Activated T-helper 2 cell treated with anti-CD3 and anti-CD28 coated beads, Interferon-gamma antibody, Interleukin-2, Interleukin-4, amounts not matched to agents 10 μg/mL and 5 μg/mL and 100 μg/mL, durations not matched to agents 14 hours and 24 hours and 36 hours (primary cell): ENCODE measurements at regions of chr17 and their contacts with region 1.

Region 1: GRCh38 chr17:59619293-59620063 is at the start of gene CLTC:
- DNase-seq: peak; percentile 92
- H3K4me3 Mint-ChIP-seq: peak within 1 kb of the TSS; percentile 91
- H3K27ac Mint-ChIP-seq: peak within 1 kb of the TSS; percentile 95
- H3K4me1 Mint-ChIP-seq: peaks cover 43% of the 10 kb centered on the region
- H3K27me3 Mint-ChIP-seq: no peaks in the 10 kb centered on the region
- total RNA-seq, gene CLTC: 188 and 193 TPM in 2 replicates

Region 2: GRCh38 chr17:59331129-59331928 is 288.1 kb before region 1 on chr17 and contains the start of gene YPEL2:
- intact Hi-C with region 1: no loop called
- DNase-seq: peak; percentile 84
- H3K4me3 Mint-ChIP-seq: peak within 1 kb of the TSS; percentile 84
- H3K27ac Mint-ChIP-seq: peak within 1 kb of the TSS; percentile 68
- H3K4me1 Mint-ChIP-seq: peaks cover 41% of the 10 kb centered on the region
- H3K27me3 Mint-ChIP-seq: peaks cover 14% of the 10 kb centered on the region
- total RNA-seq, gene YPEL2: 5.0 and 5.3 TPM in 2 replicates

Region 3: GRCh38 chr17:59601130-59601529 is 18.3 kb before region 1 on chr17:
- intact Hi-C with region 1: loop called (anchors 2 kb)
- DNase-seq: peak; percentile 23
- H3K4me3 Mint-ChIP-seq: no peak overlapping the region
- H3K27ac Mint-ChIP-seq: peak overlapping the region; percentile 43
- H3K4me1 Mint-ChIP-seq: peaks cover 19% of the 10 kb centered on the region
- H3K27me3 Mint-ChIP-seq: no peaks in the 10 kb centered on the region

Region 4: DNA sequence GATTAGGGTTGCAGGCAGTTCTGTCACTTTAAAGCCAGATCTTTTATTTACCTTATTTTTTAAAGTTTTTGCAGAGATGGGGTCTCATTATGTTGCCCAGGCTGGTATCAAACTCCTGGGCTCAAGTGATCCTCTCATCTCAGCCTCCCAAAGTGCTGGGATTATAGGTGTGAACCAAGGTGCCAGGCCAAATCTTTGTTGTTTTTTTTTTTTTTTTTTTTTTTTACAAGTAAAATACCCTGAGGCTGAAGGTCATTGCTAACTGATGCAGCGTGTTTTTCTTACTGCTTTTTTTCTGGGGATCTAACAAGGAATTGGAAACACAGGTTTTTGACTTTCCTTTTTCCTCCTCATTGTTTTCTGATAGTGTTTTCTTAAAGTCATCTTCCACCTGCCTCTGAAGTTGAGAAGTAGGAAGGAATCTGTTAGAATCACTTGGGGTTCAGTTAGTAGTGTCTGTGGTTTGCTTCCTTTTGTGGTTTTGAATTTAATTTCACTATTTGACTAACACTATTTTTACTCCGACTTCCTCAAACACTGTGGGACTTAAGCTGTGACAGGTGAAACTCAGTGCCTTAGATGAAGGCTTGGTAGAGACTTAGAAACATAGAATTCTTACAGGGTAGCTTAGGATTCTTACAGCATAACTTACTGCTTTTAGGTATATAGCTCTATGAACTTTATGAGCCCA is 22.5 kb after region 1 on chr17:
- intact Hi-C with region 1: loop called (anchors 2 kb)
- DNase-seq: no peak
- H3K4me3 Mint-ChIP-seq: peak overlapping the region; percentile 40
- H3K27ac Mint-ChIP-seq: peak overlapping the region; percentile 48
- H3K4me1 Mint-ChIP-seq: peaks cover 34% of the 10 kb centered on the region
- H3K27me3 Mint-ChIP-seq: no peaks in the 10 kb centered on the region

Region 5: GRCh38 chr17:59753522-59754467 is 134.3 kb after region 1 on chr17:
- intact Hi-C with region 1: loop called (anchors 5 kb)
- DNase-seq: no peak
- H3K4me3 Mint-ChIP-seq: peak overlapping the region; percentile 68
- H3K27ac Mint-ChIP-seq: peak overlapping the region; percentile 85
- H3K4me1 Mint-ChIP-seq: peaks cover 53% of the 10 kb centered on the region
- H3K27me3 Mint-ChIP-seq: no peaks in the 10 kb centered on the region

Region 6: GRCh38 chr17:59892924-59893676 is 273.6 kb after region 1 on chr17 and contains the starts of genes RPS6KB1 and TUBD1:
- intact Hi-C with region 1: loop called (anchors 2 kb)
- DNase-seq: peak; percentile 98
- H3K4me3 Mint-ChIP-seq: peak within 1 kb of the TSS; percentile 97
- H3K27ac Mint-ChIP-seq: peak within 1 kb of the TSS; percentile 97
- H3K4me1 Mint-ChIP-seq: peaks cover 29% of the 10 kb centered on the region
- H3K27me3 Mint-ChIP-seq: no peaks in the 10 kb centered on the region
- total RNA-seq, gene RPS6KB1: 65.9 and 70.1 TPM in 2 replicates
- total RNA-seq, gene TUBD1: 8.2 and 9.3 TPM in 2 replicates